Naive thymus-derived CD4-positive, alpha-beta T cell (primary cell): ENCODE measurements at regions of chr16 and their contacts with region 1.

Region 1: DNA sequence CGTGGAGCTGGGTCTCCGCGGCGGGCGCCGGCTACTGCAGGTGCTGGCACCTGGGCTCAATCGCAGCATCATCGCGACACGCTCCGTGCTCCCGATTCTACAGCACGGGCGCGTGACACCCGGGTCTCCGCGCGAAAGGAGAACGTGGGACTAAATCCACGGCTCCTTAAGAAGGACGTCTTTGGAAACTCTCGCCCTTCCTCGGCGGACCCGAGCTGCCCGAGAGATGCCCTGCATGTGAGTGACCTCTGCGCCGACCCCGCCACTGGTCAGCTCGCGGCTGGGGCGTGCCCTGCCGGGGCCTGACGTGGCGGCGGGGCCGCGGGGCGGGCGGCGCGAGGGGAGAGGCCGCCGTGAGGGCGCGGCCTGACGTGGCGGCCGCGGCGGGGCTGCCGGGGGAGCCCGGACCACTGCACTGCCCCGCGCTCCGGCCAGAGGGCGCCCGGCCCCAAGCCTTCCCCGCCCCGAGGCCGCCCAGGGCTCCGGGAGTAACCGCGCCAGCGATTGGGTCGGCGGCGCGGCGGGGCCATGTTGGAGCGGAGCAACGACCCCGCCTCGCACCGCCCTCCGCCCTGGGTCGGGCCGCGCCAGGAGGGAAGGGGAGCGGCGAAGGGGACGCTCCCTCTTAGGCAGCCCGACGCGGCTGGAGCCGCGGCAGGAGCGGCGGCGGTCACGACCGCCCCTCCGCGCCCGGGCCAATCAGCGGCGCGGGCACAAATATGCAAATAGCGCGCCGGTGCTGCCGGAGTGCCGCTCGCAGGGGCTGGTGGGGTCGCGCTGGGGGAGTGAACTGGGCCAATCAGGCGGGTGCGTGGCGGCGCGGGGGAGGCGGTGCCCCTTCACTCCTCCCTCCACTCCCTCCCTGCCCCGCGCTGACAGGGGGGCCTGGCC is 75.6 kb downstream of the CHD9 start:
- DNase-seq: peak; percentile 93 to 96 (median 95)
- ATAC-seq: peak; percentile 94
- H3K4me3 ChIP-seq: peak overlapping the region; percentile 77
- H3K4me3 Mint-ChIP-seq: peak overlapping the region; percentile 69 to 94 (median 84)
- H3K27ac ChIP-seq: peak overlapping the region; percentile 73
- H3K27ac Mint-ChIP-seq: peak overlapping the region; percentile 57 to 90 (median 79)
- H3K4me1 ChIP-seq: peaks cover 0 to 4% of the 10 kb centered on the region in 2 donors
- H3K4me1 Mint-ChIP-seq: peaks cover 6 to 29% (median 12%) of the 10 kb centered on the region in 7 donors
- H3K27me3 ChIP-seq: no peaks in the 10 kb centered on the region
- H3K27me3 Mint-ChIP-seq: peaks cover 0 to 6% (median 0%) of the 10 kb centered on the region in 5 donors

Region 2: DNA sequence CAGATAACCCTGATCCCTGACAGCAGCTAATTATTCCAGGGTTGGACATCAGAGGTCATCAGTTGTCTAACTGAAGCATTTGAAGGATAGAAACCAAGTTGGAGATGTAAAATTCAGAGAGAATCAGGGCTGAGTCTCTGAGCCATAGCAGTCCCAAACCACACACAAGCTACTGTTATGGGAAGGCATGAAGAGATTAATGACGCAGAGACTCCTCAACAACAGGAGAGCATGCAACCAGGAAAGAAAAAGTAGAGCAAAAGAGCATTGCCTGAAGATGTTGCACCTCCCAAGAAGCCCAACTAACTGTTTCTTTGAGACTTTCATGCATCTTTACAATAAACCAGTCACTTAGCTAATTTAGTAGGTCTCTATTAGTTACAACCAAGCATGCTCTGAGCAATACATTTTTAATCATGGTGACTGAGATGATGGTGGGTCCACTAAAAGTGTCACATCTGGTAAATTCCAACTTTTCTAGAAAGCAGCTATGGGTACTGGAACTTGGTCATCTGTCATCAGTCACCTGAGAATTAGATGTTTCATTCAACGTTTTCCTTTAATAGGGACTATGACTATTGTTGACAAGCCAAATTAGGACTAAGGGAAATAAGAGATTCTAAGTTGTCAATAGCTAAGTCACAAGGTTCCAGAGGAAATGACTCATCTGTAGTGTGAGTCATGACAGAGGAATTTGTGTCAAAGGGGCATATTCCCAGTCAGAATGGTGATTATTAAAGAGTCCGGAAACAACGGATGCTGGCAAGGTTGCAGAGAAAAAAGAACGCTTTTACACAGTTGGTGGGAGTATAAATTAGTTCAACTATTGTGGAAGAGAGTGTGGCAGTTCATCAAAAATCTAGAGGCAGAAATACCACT is 317.5 kb before region 1 on chr16:
- CTCF ChIA-PET with region 1: no interaction called
- POLR2A ChIA-PET with region 1: no interaction called
- intact Hi-C with region 1: no loop called
- DNase-seq: no peak
- ATAC-seq: no peak
- H3K4me3 ChIP-seq: no peak overlapping the region
- H3K4me3 Mint-ChIP-seq: no peak overlapping the region
- H3K27ac ChIP-seq: no peak overlapping the region
- H3K27ac Mint-ChIP-seq: no peak overlapping the region
- H3K4me1 ChIP-seq: no peaks in the 10 kb centered on the region
- H3K4me1 Mint-ChIP-seq: no peaks in the 10 kb centered on the region
- H3K27me3 ChIP-seq: no peaks in the 10 kb centered on the region
- H3K27me3 Mint-ChIP-seq: peaks cover 0 to 5% (median 0%) of the 10 kb centered on the region in 5 donors

Region 3: GRCh38 chr16:52929478-52930400 is 200.7 kb before region 1 on chr16:
- CTCF ChIA-PET with region 1: no interaction called
- POLR2A ChIA-PET with region 1: no interaction called
- intact Hi-C with region 1: no loop called
- DNase-seq: no peak
- ATAC-seq: no peak
- H3K4me3 ChIP-seq: no peak overlapping the region
- H3K4me3 Mint-ChIP-seq: no peak overlapping the region
- H3K27ac ChIP-seq: no peak overlapping the region
- H3K27ac Mint-ChIP-seq: no peak overlapping the region
- H3K4me1 ChIP-seq: no peaks in the 10 kb centered on the region
- H3K4me1 Mint-ChIP-seq: no peaks in the 10 kb centered on the region
- H3K27me3 ChIP-seq: peaks cover 0 to 2% of the 10 kb centered on the region in 2 donors
- H3K27me3 Mint-ChIP-seq: peaks cover 0 to 12% (median 8%) of the 10 kb centered on the region in 5 donors

Region 4: DNA sequence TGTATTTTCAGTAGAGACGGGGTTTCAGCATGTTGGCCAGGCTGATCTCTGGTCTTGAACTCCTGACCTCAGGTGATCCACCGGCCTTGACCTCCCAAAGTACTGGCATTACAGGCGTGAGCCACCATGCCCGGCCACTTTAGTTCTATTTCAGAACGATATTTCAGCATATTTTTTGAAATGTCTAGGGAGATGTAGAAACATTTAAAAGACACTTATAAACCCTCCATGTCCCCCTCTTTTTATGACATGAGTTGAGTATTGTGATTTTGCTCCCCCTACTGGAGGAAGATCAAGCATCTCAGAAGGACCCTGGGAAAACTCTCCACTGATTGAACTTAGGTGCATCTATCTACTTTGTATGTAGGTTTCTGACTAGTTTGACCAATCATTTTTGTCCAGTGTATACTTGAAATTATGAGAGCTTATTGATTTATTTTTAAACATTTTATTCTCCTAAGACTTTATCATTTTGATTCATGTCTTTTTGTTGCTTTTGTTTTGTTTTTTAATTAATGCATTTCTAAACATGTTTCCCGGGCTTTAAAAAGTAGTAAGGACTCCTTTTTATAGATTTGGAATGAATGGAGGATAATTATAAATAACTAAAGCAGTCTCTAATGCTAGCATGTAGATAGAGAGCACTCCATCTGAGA is 29.5 kb after region 1 on chr16:
- CTCF ChIA-PET with region 1: interaction called, 6 read pairs
- POLR2A ChIA-PET with region 1: no interaction called
- intact Hi-C with region 1: loop called (anchors 1 kb)
- DNase-seq: peak in 7 of 9 donors; percentile 11 to 54 (median 41)
- ATAC-seq: peak; percentile 76
- H3K4me3 ChIP-seq: no peak overlapping the region
- H3K4me3 Mint-ChIP-seq: no peak overlapping the region
- H3K27ac ChIP-seq: no peak overlapping the region
- H3K27ac Mint-ChIP-seq: no peak overlapping the region
- H3K4me1 ChIP-seq: no peaks in the 10 kb centered on the region
- H3K4me1 Mint-ChIP-seq: peaks cover 2 to 13% (median 6%) of the 10 kb centered on the region in 7 donors
- H3K27me3 ChIP-seq: no peaks in the 10 kb centered on the region
- H3K27me3 Mint-ChIP-seq: no peaks in the 10 kb centered on the region

Region 5: GRCh38 chr16:53282975-53283946 is 152.9 kb after region 1 on chr16:
- CTCF ChIA-PET with region 1: no interaction called
- POLR2A ChIA-PET with region 1: no interaction called
- intact Hi-C with region 1: loop called (anchors 1 to 2 kb)
- DNase-seq: peak in 4 of 9 donors; percentile 3 to 29 (median 6)
- ATAC-seq: no peak
- H3K4me3 ChIP-seq: no peak overlapping the region
- H3K4me3 Mint-ChIP-seq: no peak overlapping the region
- H3K27ac ChIP-seq: no peak overlapping the region
- H3K27ac Mint-ChIP-seq: no peak overlapping the region
- H3K4me1 ChIP-seq: no peaks in the 10 kb centered on the region
- H3K4me1 Mint-ChIP-seq: no peaks in the 10 kb centered on the region
- H3K27me3 ChIP-seq: no peaks in the 10 kb centered on the region
- H3K27me3 Mint-ChIP-seq: no peaks in the 10 kb centered on the region

Region 6: GRCh38 chr16:53457670-53458069 is 327.3 kb after region 1 on chr16:
- CTCF ChIA-PET with region 1: no interaction called
- POLR2A ChIA-PET with region 1: no interaction called
- intact Hi-C with region 1: loop called in 1 of 2 experiments (anchors 1 kb)
- DNase-seq: peak; percentile 13 to 94 (median 89)
- ATAC-seq: peak; percentile 91
- H3K4me3 ChIP-seq: peak overlapping the region; percentile 38
- H3K4me3 Mint-ChIP-seq: peak overlapping the region; percentile 80 to 93 (median 88)
- H3K27ac ChIP-seq: peak overlapping the region; percentile 65
- H3K27ac Mint-ChIP-seq: peak overlapping the region; percentile 88 to 99 (median 96)
- H3K4me1 ChIP-seq: peaks cover 79 to 81% of the 10 kb centered on the region in 2 donors
- H3K4me1 Mint-ChIP-seq: peaks cover 57 to 100% (median 89%) of the 10 kb centered on the region in 7 donors
- H3K27me3 ChIP-seq: no peaks in the 10 kb centered on the region
- H3K27me3 Mint-ChIP-seq: peaks cover 0 to 2% (median 0%) of the 10 kb centered on the region in 5 donors

Region 7: GRCh38 chr16:53509906-53510703 is 379.7 kb after region 1 on chr16:
- CTCF ChIA-PET with region 1: no interaction called
- POLR2A ChIA-PET with region 1: interaction called, 3 read pairs
- intact Hi-C with region 1: loop called (anchors 1 to 2 kb)
- DNase-seq: peak; percentile 34 to 72 (median 50)
- ATAC-seq: peak; percentile 86
- H3K4me3 ChIP-seq: peak overlapping the region; percentile 21
- H3K4me3 Mint-ChIP-seq: peak overlapping the region; percentile 8 to 75 (median 52)
- H3K27ac ChIP-seq: no peak overlapping the region
- H3K27ac Mint-ChIP-seq: peak overlapping the region in 4 of 9 donors; percentile 14 to 48 (median 31)
- H3K4me1 ChIP-seq: peaks cover 0 to 13% of the 10 kb centered on the region in 2 donors
- H3K4me1 Mint-ChIP-seq: peaks cover 1 to 44% (median 21%) of the 10 kb centered on the region in 7 donors
- H3K27me3 ChIP-seq: no peaks in the 10 kb centered on the region
- H3K27me3 Mint-ChIP-seq: peaks cover 0 to 6% (median 0%) of the 10 kb centered on the region in 5 donors

Region 8: DNA sequence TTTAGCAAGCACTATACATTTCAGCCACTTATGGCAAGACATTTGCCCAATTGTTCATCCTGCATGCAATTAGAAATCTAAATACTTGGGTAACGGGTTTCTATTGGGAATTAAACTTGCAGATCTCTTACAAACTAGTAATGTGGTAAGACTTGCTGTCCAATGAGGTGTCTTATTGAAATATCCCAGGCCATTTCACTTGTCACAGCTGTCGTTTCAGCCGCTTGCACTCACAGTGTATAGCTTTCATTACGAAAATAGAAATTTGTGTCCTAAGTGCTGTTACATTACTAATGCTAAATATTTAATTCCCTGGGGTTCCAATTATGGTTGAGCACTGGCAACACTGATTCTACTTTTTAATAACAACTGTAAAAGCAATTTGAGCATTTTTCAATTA is 1760.0 kb after region 1 on chr16:
- CTCF ChIA-PET with region 1: no interaction called
- POLR2A ChIA-PET with region 1: no interaction called
- intact Hi-C with region 1: no loop called
- DNase-seq: no peak
- ATAC-seq: no peak
- H3K4me3 ChIP-seq: no peak overlapping the region
- H3K4me3 Mint-ChIP-seq: no peak overlapping the region
- H3K27ac ChIP-seq: no peak overlapping the region
- H3K27ac Mint-ChIP-seq: no peak overlapping the region
- H3K4me1 ChIP-seq: no peaks in the 10 kb centered on the region
- H3K4me1 Mint-ChIP-seq: no peaks in the 10 kb centered on the region
- H3K27me3 ChIP-seq: no peaks in the 10 kb centered on the region
- H3K27me3 Mint-ChIP-seq: peaks cover 0 to 11% (median 5%) of the 10 kb centered on the region in 5 donors